A673 (cell line): ENCODE measurements at regions of chr4 and their contacts with region 1.

Region 1: DNA sequence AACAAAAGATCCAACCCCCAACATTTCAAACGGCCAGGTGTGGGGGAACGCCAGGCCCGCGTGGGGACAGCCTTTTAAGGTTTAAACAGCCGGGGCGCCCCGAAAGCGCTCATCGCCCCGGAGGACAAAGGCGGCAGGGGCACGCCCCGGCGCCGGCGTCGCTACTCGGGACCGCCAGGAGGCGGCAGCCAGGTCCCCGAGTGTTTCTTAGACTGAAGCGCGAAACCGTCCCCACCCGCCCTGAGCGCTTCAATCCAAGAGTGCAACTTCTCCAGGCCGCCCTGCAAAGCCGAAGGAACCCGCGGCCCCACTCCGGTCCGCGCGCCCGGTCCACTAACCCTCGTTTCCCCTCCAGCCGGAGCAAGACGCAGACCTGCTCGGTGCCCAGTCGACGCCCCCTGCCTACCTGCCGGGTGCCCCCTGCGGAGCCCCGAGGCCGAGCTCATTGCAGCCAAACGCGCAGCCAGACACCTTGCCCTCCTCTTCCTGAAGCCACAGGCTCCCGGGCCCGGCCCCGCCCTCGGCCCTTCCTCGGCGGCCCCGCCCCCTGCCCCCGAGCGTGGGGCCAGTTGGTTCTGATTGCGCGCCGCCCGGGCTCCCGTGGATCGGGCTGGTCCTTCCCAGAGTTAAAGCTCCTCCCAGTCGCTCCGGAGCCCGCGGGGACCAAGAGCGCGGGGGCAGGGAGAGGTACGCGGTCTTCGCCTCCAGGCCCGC is at the start of gene CASP6:
- DNase-seq: peak; percentile 86
- H3K4me3 ChIP-seq: peak within 1 kb of the TSS; percentile 91
- H3K27ac ChIP-seq: peak within 1 kb of the TSS; percentile 90
- H3K4me1 ChIP-seq: peaks cover 17% of the 10 kb centered on the region
- H3K27me3 ChIP-seq: no peaks in the 10 kb centered on the region
- CTCF ChIP-seq: peak; percentile 75
- total RNA-seq, gene CASP6: 30.5 and 33.0 TPM in 2 replicates

Region 2: DNA sequence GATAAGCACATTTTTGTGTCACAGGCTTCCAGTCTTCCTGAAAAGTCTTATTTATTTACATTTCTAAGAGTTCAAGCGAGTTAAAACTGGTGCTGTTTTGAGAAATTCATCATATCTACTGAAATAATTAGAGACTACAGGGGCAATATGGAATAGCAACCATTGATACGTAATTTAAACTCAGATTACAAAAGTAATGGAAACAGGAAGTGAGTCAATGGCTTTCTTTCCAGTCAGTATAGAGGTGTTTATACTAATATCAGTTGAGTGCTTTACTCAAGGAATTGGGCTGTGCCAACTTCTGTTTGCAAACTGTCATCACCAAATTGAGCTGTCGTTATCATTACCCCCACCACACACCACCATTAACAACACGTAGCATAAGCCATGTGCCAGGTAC is 623.4 kb before region 1 on chr4:
- CTCF ChIA-PET with region 1: no interaction called
- POLR2A ChIA-PET with region 1: no interaction called
- intact Hi-C with region 1: no loop called
- DNase-seq: peak; percentile 63
- H3K4me3 ChIP-seq: no peak overlapping the region
- H3K27ac ChIP-seq: no peak overlapping the region
- H3K4me1 ChIP-seq: peaks cover 22% of the 10 kb centered on the region
- H3K27me3 ChIP-seq: no peaks in the 10 kb centered on the region
- CTCF ChIP-seq: no peak

Region 3: DNA sequence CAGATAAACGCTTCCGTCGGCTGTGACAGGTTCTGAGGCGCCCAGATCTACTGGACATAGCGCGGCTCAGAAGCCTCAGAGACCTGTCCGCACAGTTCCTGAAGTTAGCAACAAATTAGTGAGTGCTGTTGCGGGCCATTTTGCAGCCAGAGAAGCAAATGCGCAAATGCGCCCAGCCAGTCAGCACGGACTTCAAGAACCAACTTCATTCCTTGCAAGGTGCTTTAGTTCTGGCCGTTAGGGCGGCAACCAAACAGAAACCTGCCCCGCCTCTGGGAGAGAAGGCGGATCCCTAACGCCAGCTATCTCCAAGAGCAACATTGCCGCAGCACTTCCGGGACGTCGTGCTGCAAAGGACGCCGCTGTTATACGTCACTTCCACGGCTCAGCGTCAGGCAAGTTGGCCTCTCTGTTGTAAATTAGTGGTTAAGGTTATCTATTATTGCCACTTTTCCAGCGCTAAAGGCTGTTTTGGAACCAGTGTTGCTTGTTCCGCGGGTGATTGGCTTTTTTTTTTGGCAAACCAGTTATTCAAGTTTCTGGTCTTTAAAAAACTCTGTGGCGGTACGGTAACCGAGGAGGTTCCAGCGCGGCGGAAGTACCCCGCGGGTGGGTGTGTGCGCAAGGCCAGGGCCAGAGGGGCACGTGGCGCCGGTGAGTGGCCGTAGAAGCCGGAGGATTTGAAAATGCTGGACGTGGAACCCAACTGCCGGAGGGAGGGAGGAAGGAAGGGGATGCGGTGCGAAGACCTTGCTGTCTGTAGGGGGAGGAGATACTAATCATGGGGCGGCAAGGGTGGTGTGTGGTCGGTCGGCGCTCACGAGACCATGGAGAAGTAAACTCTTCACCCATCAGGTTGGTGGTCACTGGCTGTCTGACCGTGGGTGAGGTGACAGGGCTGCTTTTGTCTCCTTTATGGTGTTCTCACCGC is 112.3 kb after region 1 on chr4 and contains the start of gene GAR1:
- CTCF ChIA-PET with region 1: no interaction called
- POLR2A ChIA-PET with region 1: interaction called, 3 read pairs
- intact Hi-C with region 1: loop called (anchors 5 kb)
- DNase-seq: peak; percentile 97
- H3K4me3 ChIP-seq: peak within 1 kb of the TSS; percentile 65
- H3K27ac ChIP-seq: peak within 1 kb of the TSS; percentile 88
- H3K4me1 ChIP-seq: peaks cover 10% of the 10 kb centered on the region
- H3K27me3 ChIP-seq: no peaks in the 10 kb centered on the region
- CTCF ChIP-seq: no peak
- total RNA-seq, gene GAR1: 56.0 and 67.6 TPM in 2 replicates

Region 4: DNA sequence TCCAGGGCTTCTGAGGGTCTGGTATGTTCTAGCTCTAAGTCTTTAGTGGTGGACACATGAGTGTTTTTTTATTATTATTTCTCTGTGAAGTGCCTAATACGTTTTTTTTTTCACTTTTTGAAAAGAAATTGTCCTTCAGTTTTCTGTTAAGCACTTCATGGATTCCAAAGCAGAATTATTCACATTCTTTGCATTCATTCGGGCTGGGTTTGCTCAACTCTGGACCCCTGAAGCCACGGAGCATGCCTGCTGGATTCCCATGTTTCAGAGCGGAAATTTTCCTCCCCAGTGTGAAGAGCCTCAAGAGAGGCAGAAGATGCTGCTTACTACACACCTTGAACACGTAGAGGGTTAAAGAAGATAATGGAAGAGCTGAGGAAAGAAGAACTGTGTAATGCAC is 317.0 kb after region 1 on chr4:
- CTCF ChIA-PET with region 1: no interaction called
- POLR2A ChIA-PET with region 1: no interaction called
- intact Hi-C with region 1: no loop called
- DNase-seq: peak; percentile 34
- H3K4me3 ChIP-seq: peak overlapping the region; percentile 11
- H3K27ac ChIP-seq: peak overlapping the region; percentile 47
- H3K4me1 ChIP-seq: peaks cover 9% of the 10 kb centered on the region
- H3K27me3 ChIP-seq: no peaks in the 10 kb centered on the region
- CTCF ChIP-seq: no peak